Naive thymus-derived CD8-positive, alpha-beta T cell (primary cell): ENCODE measurements at regions of chr1 and their contacts with region 1.

Region 1: GRCh38 chr1:204516180-204516879 is at the start of gene MDM4:
- DNase-seq: peak; percentile 75 to 96 (median 92)
- ATAC-seq: peak; percentile 71 to 78
- H3K4me3 Mint-ChIP-seq: no peak within 1 kb of the TSS
- H3K27ac Mint-ChIP-seq: peak within 1 kb of the TSS in 4 of 10 donors; percentile 21 to 99 (median 76)
- H3K4me1 Mint-ChIP-seq: peaks cover 19 to 74% (median 62%) of the 10 kb centered on the region in 4 donors
- H3K27me3 Mint-ChIP-seq: no peaks in the 10 kb centered on the region
- polyA plus RNA-seq, gene MDM4: 10.0 to 23.1 (median 10.7) TPM

Region 2: GRCh38 chr1:204544321-204544720 is 28.0 kb after region 1 on chr1:
- POLR2A ChIA-PET with region 1: interaction called, 79 read pairs
- DNase-seq: peak in 4 of 10 donors; percentile 16 to 69 (median 60)
- ATAC-seq: peak; percentile 93 to 97
- H3K4me3 Mint-ChIP-seq: peak overlapping the region in 9 of 10 donors; percentile 31 to 76 (median 63)
- H3K27ac Mint-ChIP-seq: peak overlapping the region; percentile 35 to 92 (median 82)
- H3K4me1 Mint-ChIP-seq: peaks cover 24 to 56% (median 55%) of the 10 kb centered on the region in 4 donors
- H3K27me3 Mint-ChIP-seq: no peaks in the 10 kb centered on the region